Right cardiac atrium (tissue), 5 donors: ENCODE measurements at regions of chr13 and their contacts with region 1.

Region 1: DNA sequence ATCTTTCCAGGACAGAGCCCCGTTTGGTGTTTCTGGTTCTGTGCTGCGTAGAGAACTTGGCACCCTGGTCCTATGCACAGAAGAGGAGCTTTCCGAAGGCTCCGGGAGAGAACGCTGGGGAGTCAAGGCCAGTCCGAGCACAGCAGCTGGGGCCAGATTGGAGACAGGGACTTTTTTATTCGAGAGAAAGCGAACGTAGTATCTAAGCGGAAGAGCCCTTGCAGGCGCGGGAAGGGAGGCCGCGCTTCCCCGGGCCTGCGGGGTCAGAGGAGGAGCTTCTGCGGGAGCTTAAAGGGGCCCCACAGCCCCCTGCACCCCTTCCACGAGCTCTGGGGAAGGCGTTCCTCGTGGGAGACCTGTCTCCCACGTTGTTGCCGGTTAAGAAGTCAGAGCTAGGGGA is 48.6 kb upstream of the ARHGEF7 start:
- DNase-seq: peak in 2 of 3 donors; percentile 65 to 68
- ATAC-seq: peak; percentile 58 to 60
- H3K4me3 ChIP-seq: peak overlapping the region; percentile 26
- H3K27ac ChIP-seq: no peak overlapping the region
- H3K4me1 ChIP-seq: no peaks in the 10 kb centered on the region
- H3K27me3 ChIP-seq: no peaks in the 10 kb centered on the region

Region 2: GRCh38 chr13:110980921-110981320 is 85.6 kb before region 1 on chr13:
- intact Hi-C with region 1: no loop called
- DNase-seq: no peak
- ATAC-seq: no peak
- H3K4me3 ChIP-seq: no peak overlapping the region
- H3K27ac ChIP-seq: no peak overlapping the region
- H3K4me1 ChIP-seq: no peaks in the 10 kb centered on the region
- H3K27me3 ChIP-seq: no peaks in the 10 kb centered on the region

Region 3: DNA sequence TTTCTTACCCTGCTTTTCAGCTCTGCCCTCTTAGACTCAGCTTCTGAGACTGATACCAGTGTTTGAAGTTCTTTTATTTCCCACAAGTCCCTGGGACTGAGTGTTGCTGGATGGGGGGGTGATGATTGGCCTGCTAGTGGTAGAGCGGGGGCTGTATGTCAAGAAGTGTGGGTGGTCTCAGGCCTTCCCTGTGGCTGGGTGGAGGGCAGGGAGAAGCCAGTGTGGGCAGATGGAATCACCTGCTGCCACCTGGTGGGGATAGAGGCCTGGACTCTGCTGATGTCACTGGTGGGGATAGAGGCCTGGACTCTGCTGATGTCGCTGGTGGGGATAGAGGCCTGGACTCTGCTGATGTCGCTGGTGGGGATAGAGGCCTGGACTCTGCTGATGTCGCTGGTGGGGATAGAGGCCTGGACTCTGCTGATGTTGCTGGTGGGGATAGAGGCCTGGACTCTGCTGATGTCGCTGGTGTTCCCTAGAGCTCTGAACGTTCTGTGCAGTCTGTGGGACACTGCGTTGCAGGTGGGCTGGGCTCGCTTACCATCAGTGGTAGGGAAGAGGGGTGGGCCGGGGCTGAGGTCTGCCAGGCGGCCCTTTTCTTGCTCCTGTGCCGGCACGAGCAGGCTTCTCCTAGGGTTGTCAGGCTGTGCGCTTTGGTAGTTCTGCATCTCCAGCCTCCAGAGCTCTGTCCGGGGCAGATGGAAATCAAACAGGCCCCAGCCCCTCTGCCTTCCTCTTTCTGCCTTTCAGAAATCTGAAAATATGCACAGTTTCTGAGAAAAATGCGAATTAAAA is 149.8 kb after region 1 on chr13:
- intact Hi-C with region 1: loop called in 2 of 4 experiments (anchors 5 to 10 kb)
- DNase-seq: peak in 2 of 3 donors; percentile 60 to 63
- ATAC-seq: peak; percentile 38 to 54
- H3K4me3 ChIP-seq: no peak overlapping the region
- H3K27ac ChIP-seq: no peak overlapping the region
- H3K4me1 ChIP-seq: peaks cover 29% of the 10 kb centered on the region
- H3K27me3 ChIP-seq: no peaks in the 10 kb centered on the region

Region 4: GRCh38 chr13:111228262-111229144 is 162.0 kb after region 1 on chr13:
- intact Hi-C with region 1: loop called in 3 of 4 experiments (anchors 5 to 10 kb)
- DNase-seq: no peak
- ATAC-seq: no peak
- H3K4me3 ChIP-seq: no peak overlapping the region
- H3K27ac ChIP-seq: no peak overlapping the region
- H3K4me1 ChIP-seq: peaks cover 5% of the 10 kb centered on the region
- H3K27me3 ChIP-seq: no peaks in the 10 kb centered on the region

Region 5: GRCh38 chr13:111281751-111282311 is 215.3 kb after region 1 on chr13:
- intact Hi-C with region 1: no loop called
- DNase-seq: no peak
- ATAC-seq: peak; percentile 13 to 17
- H3K4me3 ChIP-seq: no peak overlapping the region
- H3K27ac ChIP-seq: peak overlapping the region; percentile 98
- H3K4me1 ChIP-seq: peaks cover 4% of the 10 kb centered on the region
- H3K27me3 ChIP-seq: no peaks in the 10 kb centered on the region